ENCODE measurements at regions of chr12 and their contacts with region 1.

Region 1: DNA sequence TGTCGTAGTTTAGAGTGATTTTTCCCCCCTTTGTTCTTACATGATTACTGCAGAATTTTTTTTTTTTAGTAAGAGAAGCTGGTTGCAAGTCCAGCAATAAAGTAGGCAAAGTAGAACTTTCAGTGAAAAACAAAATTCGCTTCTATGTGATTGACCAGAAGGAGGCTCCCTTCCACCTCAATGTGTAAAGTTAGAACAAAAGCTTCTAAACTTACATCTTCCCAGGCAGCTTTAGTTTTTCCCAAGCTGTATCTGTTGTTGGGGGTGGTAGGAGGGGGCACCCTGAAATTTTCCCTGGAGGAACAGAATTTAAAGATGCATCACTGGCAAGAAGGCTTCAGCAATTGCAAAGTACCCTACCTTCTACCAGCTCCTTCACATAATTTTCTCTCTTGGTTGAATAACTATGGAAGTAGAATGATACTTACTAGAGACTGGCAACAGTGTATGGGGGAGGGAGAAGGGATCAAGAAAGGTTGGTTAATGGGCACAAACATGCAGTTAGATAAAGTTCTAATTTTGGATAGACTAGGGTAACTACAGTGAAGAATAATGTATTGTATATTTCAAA is 87.3 kb upstream of the E2F7 start:
- DNase-seq: no peak
- ATAC-seq: no peak
- H3K4me3 ChIP-seq: no peak overlapping the region
- H3K27ac ChIP-seq: no peak overlapping the region
- H3K4me1 ChIP-seq: no peaks in the 10 kb centered on the region
- H3K27me3 ChIP-seq: no peaks in the 10 kb centered on the region

Region 2: DNA sequence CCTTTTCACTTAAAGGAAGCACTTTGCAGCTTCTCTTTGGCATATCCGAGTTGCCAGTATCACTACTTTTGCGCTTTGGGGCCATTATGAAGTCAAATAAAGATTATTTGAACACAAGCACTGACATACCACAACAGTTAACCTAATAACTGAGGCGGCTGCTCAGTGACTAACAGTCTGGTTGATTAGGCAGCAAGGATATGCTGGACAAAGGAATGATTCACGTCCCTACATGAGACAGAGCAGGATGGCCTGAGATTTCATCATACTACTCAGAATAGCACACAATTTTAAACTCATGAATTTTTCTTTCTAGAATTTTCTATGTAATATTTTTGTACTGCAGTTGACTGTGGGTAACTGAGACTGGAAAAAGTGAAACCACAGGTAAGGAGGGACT is 30.5 kb before region 1 on chr12:
- intact Hi-C with region 1: no loop called
- DNase-seq: no peak
- ATAC-seq: no peak
- H3K4me3 ChIP-seq: no peak overlapping the region
- H3K27ac ChIP-seq: no peak overlapping the region
- H3K4me1 ChIP-seq: no peaks in the 10 kb centered on the region
- H3K27me3 ChIP-seq: no peaks in the 10 kb centered on the region

Region 3: DNA sequence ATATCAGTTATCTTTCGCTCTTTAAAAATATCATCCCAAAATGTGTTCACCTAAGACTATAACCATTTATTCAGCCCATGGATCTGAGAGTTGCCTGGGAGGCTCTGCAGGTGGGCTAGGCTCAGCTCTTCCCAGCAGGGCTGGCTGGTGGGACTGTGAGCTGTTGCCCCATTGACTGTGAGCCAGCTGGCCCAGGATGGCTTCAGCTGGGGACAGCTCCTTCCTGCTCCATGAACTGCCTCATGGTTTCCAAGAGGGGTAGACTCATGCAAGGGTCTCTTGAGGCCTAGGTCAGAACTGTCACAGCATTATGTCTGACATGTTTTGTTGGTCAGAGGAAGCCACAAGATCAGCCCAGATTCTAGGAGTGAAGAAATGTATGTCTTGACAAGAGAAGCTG is 26.8 kb after region 1 on chr12:
- intact Hi-C with region 1: no loop called
- DNase-seq: no peak
- ATAC-seq: no peak
- H3K4me3 ChIP-seq: no peak overlapping the region
- H3K27ac ChIP-seq: no peak overlapping the region
- H3K4me1 ChIP-seq: no peaks in the 10 kb centered on the region
- H3K27me3 ChIP-seq: no peaks in the 10 kb centered on the region

Region 4: DNA sequence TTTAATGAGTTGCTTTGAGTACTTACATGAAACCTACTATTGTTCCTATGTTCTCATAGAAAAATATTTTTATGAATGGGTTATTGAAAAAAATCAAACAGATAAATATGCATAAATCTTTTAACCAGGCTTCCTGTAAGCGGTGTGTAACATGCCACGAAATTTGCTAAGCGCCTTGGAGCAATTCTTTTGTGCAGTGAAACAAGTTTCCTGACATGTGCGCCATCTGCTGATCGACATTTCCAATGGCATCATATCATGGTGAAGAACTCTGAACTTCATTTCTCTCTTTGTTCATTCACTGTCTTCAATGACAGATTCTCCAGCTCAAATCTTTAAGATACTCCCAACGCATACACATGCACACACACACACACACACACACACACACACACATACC is 532.4 kb after region 1 on chr12:
- intact Hi-C with region 1: loop called in 1 of 2 experiments (anchors 5 kb)
- DNase-seq: peak; percentile 42 to 73
- ATAC-seq: peak; percentile 79
- H3K4me3 ChIP-seq: no peak overlapping the region
- H3K27ac ChIP-seq: no peak overlapping the region
- H3K4me1 ChIP-seq: no peaks in the 10 kb centered on the region
- H3K27me3 ChIP-seq: no peaks in the 10 kb centered on the region

Measured in aorta (tissue), 5 donors.